GM12878 (cell line): ENCODE measurements at regions of chr1 and their contacts with region 1.

Region 1: GRCh38 chr1:32798679-32799416 is 18.3 kb downstream of the YARS1 start:
- DNase-seq: peak; percentile 55
- ATAC-seq: peak; percentile 91
- H3K4me3 ChIP-seq: no peak overlapping the region
- H3K27ac ChIP-seq: 0 out of 2 replicates have a peak overlapping the region, but pooled peaks have one; percentile 13
- H3K4me1 ChIP-seq: peaks cover 9% of the 10 kb centered on the region; the same call in 1 of the 2 replicates
- H3K27me3 ChIP-seq: no peaks in the 10 kb centered on the region
- CTCF ChIP-seq: no peak
- EP300 ChIP-seq: peak; percentile 32 to 33; a peak in 1 of 4 replicates
- POLR2A ChIP-seq: no peak
- RAD21 ChIP-seq: no peak

Region 2: GRCh38 chr1:32817159-32817814 is 18.4 kb after region 1 on chr1 and contains the starts of genes S100PBP and YARS1:
- CTCF ChIA-PET with region 1: interaction called, 3 read pairs
- POLR2A ChIA-PET with region 1: interaction called, 14 read pairs
- RAD21 ChIA-PET with region 1: no interaction called
- SMC1A ChIA-PET with region 1: interaction called, 3 read pairs
- in situ Hi-C with region 1: no loop called
- intact Hi-C with region 1: no loop called
- DNase-seq: peak; percentile 93
- ATAC-seq: peak; percentile 88
- H3K4me3 ChIP-seq: peak within 1 kb of the TSS; percentile 90
- H3K27ac ChIP-seq: peak within 1 kb of the TSS; percentile 100
- H3K4me1 ChIP-seq: peaks cover 28% of the 10 kb centered on the region
- H3K27me3 ChIP-seq: no peaks in the 10 kb centered on the region
- CTCF ChIP-seq: no peak; a peak in 1 of 6 replicates
- EP300 ChIP-seq: peak; percentile 37 to 65; a peak in 2 of 4 replicates
- POLR2A ChIP-seq: peak; percentile 92
- RAD21 ChIP-seq: no peak
- polyA plus RNA-seq, gene S100PBP: 17.0 to 19.1 TPM
- polyA plus RNA-seq, gene YARS1: 39.9 to 66.4 TPM